SK-N-SH (cell line): ENCODE measurements at regions of chr1 and their contacts with region 1.

Region 1: DNA sequence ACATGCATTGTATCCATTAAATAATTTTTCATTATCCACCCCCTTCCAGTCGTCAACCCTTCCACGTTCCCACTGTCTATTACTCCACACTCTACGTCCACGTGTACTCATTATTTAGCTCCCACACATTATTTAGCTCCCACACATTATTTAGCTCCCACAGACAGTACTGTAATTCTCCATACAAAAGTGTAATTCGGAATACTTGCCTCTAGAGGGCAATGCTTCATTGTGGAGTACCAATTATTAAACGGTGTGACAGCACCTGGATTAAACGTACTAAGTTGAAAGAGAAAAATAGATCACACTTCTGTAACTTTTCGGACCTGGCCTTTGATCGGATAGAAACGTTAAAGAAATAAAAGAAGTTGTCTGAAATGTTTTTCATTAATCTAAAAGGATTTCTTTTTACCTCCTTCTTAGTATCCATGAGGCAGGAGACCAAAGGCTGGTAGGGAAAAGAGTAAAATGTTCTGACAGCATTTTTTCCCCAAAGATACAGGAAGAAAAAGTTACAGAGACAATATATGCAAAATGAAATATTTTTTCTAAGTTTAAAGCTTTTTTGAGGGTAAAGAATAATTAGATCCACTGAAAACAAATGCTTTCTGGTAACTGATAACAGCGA is 99.2 kb downstream of the LHX8 start:
- DNase-seq: peak; percentile 9
- H3K4me3 ChIP-seq: peak overlapping the region in 1 of 2 experiments; percentile 6; a peak in 1 of 4 replicates
- H3K27ac ChIP-seq: no peak overlapping the region; a peak in 1 of 4 replicates
- H3K4me1 ChIP-seq: peaks cover 0 to 2% of the 10 kb centered on the region in 2 experiments; a peak in 1 of 4 replicates
- H3K27me3 ChIP-seq: no peaks in the 10 kb centered on the region
- CTCF ChIP-seq: peak; percentile 89
- EP300 ChIP-seq: no peak
- RAD21 ChIP-seq: peak; percentile 85

Region 2: GRCh38 chr1:75188892-75189291 is 44.5 kb before region 1 on chr1:
- CTCF ChIA-PET with region 1: no interaction called
- POLR2A ChIA-PET with region 1: no interaction called
- DNase-seq: no peak
- H3K4me3 ChIP-seq: no peak overlapping the region
- H3K27ac ChIP-seq: no peak overlapping the region
- H3K4me1 ChIP-seq: no peaks in the 10 kb centered on the region; a peak in 1 of 4 replicates
- H3K27me3 ChIP-seq: no peaks in the 10 kb centered on the region; the same call in 1 of the 2 replicates
- CTCF ChIP-seq: no peak
- EP300 ChIP-seq: peak in 1 of 2 experiments; percentile 37; a peak in 1 of 4 replicates
- RAD21 ChIP-seq: no peak

Region 3: GRCh38 chr1:75220072-75220471 is 13.3 kb before region 1 on chr1:
- CTCF ChIA-PET with region 1: interaction called, 19 read pairs
- POLR2A ChIA-PET with region 1: no interaction called
- DNase-seq: no peak
- H3K4me3 ChIP-seq: no peak overlapping the region
- H3K27ac ChIP-seq: no peak overlapping the region
- H3K4me1 ChIP-seq: no peaks in the 10 kb centered on the region
- H3K27me3 ChIP-seq: no peaks in the 10 kb centered on the region
- CTCF ChIP-seq: no peak
- EP300 ChIP-seq: no peak
- RAD21 ChIP-seq: no peak

Region 4: DNA sequence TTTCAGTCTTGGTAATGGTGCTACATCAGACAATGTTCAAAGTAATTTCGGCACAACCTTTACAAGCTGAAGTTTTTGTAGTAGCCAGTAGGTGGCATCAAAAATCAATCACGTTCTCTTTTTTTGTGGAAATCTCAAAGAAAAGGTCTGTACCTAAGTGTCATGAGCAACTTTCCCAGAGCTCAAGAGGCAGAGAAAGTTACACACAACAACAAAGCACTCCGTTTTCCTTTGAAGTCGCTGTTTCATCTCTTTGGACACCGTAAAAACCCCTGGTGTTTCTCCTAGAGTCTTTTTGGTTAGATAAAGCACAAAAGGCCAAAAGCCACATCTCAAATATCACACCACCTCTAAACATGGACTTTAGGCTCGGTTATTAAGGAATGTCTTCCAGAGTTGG is 32.4 kb after region 1 on chr1:
- CTCF ChIA-PET with region 1: interaction called, 13 read pairs
- POLR2A ChIA-PET with region 1: no interaction called
- DNase-seq: peak; percentile 10
- H3K4me3 ChIP-seq: no peak overlapping the region
- H3K27ac ChIP-seq: no peak overlapping the region
- H3K4me1 ChIP-seq: no peaks in the 10 kb centered on the region
- H3K27me3 ChIP-seq: no peaks in the 10 kb centered on the region
- CTCF ChIP-seq: peak; percentile 78
- EP300 ChIP-seq: no peak
- RAD21 ChIP-seq: peak; percentile 87

Region 5: GRCh38 chr1:75615613-75616435 is 382.4 kb after region 1 on chr1:
- CTCF ChIA-PET with region 1: interaction called, 10 read pairs
- POLR2A ChIA-PET with region 1: no interaction called
- DNase-seq: peak; percentile 88
- H3K4me3 ChIP-seq: peak overlapping the region; percentile 73 to 87
- H3K27ac ChIP-seq: peak overlapping the region in 1 of 2 experiments; percentile 69; a peak in 1 of 4 replicates
- H3K4me1 ChIP-seq: peaks cover 0 to 13% of the 10 kb centered on the region in 2 experiments; a peak in 2 of 4 replicates
- H3K27me3 ChIP-seq: no peaks in the 10 kb centered on the region
- CTCF ChIP-seq: no peak
- EP300 ChIP-seq: no peak
- RAD21 ChIP-seq: no peak